Posterior cingulate gyrus (tissue), 11 donors: ENCODE measurements at regions of chr1 and their contacts with region 1.

Region 1: DNA sequence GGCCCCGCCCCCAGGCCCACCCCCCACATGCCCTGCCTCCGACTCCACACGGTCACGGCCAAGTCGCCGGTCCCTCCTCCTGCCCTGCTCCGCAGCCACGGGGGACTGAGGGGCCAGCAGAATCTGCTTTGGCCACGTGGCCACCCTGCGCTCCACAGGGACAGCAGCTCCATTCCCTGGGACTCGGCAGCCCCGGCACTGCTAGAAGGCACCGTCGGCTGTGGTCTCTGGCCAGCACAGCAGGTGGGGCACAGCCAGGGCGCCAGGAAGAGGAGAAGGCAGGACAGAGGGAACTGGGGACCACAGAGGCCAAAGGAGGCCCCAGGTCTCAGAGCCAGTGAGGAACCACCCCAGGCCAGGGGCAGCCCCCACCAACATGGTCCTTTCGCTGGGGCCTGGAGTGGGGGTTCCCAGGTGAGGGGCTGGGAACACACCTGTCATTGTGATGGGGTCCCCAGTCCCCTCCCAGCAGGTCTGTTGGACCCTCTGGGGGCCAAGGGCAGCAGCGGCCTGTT is 7.5 kb downstream of the TNFRSF18 start:
- DNase-seq: peak in 3 of 10 donors; percentile 46 to 73 (median 58)

Region 2: GRCh38 chr1:1122078-1122811 is 76.6 kb before region 1 on chr1:
- intact Hi-C with region 1: no loop called
- DNase-seq: peak; percentile 66 to 97 (median 82)

Region 3: DNA sequence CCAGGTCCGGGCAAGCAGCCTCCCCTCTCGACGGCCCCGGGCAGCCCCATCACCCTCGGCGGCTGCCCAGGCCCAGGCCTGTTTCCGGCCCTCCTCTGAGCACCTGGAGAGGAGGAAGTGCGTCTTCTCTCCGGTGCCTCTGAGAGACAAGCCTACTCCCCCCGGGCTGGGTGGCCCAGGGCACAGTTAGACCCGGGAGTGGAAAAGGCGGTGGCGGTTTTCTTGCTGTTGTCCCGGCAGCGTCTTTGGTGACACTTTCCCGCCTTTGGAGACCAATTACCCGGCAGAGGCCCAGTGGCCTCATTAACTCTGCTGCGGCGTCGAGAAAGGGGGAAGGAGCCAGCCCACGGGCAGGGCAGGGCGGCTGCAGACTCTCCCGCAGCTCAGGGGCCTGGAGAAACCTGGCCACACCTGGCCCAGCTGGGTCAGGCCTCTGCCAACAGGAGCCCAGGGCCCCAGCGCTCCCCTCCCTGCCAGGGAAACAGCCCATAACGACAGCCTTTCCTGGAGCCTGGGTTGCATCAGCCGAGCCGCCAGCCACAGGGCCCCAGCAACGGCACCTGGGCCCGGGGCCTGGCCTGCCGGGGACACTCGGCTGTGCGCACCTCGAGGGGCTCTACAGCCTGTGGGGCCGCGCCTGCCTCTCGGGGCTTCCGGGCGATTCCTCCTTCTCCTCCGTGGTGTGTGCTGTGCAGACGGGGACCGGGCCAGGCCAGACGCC is 54.6 kb before region 1 on chr1:
- intact Hi-C with region 1: loop called (anchors 10 kb)
- DNase-seq: no peak

Region 4: DNA sequence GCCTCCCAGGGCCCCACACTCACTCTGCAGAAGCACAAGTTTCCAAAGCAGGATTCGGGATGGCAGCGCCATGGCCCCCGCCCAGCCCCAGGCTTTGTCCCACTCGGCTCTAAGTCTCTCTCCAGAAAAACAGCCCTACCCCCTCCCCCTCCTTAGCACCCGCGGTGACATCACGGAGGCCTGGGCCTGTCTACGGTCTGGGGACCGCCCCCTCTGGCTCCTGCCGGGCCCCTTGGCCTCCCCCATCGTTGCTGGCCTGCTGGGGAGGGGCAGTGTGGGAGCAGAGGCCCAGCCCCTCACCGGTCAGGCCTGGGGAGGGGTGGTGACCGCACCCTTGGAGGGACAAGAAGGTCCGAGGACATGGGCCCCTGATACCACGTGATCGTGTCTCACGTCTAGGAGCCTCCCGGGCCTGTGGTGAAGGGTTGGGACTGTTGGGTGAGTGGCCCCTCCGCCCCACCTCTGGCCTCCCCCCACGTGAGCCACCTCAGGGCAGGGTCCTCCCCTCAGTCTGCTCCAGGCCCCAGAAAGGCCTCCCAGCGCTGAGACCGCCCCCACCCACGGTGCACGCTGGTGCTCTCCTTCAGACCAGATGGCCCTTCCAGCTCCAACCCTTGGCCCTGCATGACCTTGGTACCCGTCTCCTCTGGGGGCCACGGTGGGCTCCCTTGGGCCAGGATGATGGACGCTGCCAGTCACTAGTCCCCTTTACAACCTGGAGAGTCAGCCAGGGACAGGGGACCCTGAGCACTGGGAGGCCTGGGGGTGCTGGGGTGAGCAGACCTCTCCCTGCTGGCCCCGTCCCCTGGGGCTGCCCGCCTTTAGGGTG is 159.8 kb after region 1 on chr1 and contains the start of gene MXRA8:
- intact Hi-C with region 1: no loop called
- DNase-seq: peak in 2 of 10 donors; percentile 68 to 71